PC-9 (cell line): ENCODE measurements at regions of chr7 and their contacts with region 1.

Region 1: GRCh38 chr7:151759591-151760042 is 117.3 kb downstream of the PRKAG2 start:
- DNase-seq: peak; percentile 60 to 75
- H3K4me3 ChIP-seq: no peak overlapping the region
- H3K27ac ChIP-seq: no peak overlapping the region
- H3K4me1 ChIP-seq: peaks cover 15% of the 10 kb centered on the region
- H3K27me3 ChIP-seq: no peaks in the 10 kb centered on the region
- CTCF ChIP-seq: peak; percentile 99

Region 2: GRCh38 chr7:151448261-151449252 is 311.1 kb before region 1 on chr7:
- CTCF ChIA-PET with region 1: no interaction called
- POLR2A ChIA-PET with region 1: no interaction called
- intact Hi-C with region 1: loop called (anchors 5 kb)
- DNase-seq: peak; percentile 43 to 77
- H3K4me3 ChIP-seq: peak overlapping the region; percentile 53
- H3K27ac ChIP-seq: no peak overlapping the region
- H3K4me1 ChIP-seq: no peaks in the 10 kb centered on the region
- H3K27me3 ChIP-seq: no peaks in the 10 kb centered on the region
- CTCF ChIP-seq: peak; percentile 83

Region 3: GRCh38 chr7:151570366-151570915 is 189.2 kb before region 1 on chr7:
- CTCF ChIA-PET with region 1: no interaction called
- POLR2A ChIA-PET with region 1: no interaction called
- intact Hi-C with region 1: loop called (anchors 1 kb)
- DNase-seq: no peak
- H3K4me3 ChIP-seq: no peak overlapping the region
- H3K27ac ChIP-seq: no peak overlapping the region
- H3K4me1 ChIP-seq: no peaks in the 10 kb centered on the region
- H3K27me3 ChIP-seq: no peaks in the 10 kb centered on the region
- CTCF ChIP-seq: peak; percentile 86

Region 4: GRCh38 chr7:151626422-151627115 is 133.0 kb before region 1 on chr7:
- CTCF ChIA-PET with region 1: interaction called, 7 read pairs
- POLR2A ChIA-PET with region 1: no interaction called
- intact Hi-C with region 1: loop called (anchors 1 kb)
- DNase-seq: peak; percentile 37 to 55
- H3K4me3 ChIP-seq: no peak overlapping the region
- H3K27ac ChIP-seq: no peak overlapping the region
- H3K4me1 ChIP-seq: peaks cover 16% of the 10 kb centered on the region
- H3K27me3 ChIP-seq: no peaks in the 10 kb centered on the region
- CTCF ChIP-seq: peak; percentile 65

Region 5: GRCh38 chr7:151954866-151955820 is 195.5 kb after region 1 on chr7:
- CTCF ChIA-PET with region 1: no interaction called
- POLR2A ChIA-PET with region 1: no interaction called
- intact Hi-C with region 1: no loop called
- DNase-seq: no peak
- H3K4me3 ChIP-seq: no peak overlapping the region
- H3K27ac ChIP-seq: no peak overlapping the region
- H3K4me1 ChIP-seq: no peaks in the 10 kb centered on the region
- H3K27me3 ChIP-seq: peaks cover 63% of the 10 kb centered on the region
- CTCF ChIP-seq: no peak

Region 6: GRCh38 chr7:152145853-152146466 is 386.3 kb after region 1 on chr7:
- CTCF ChIA-PET with region 1: no interaction called
- POLR2A ChIA-PET with region 1: no interaction called
- intact Hi-C with region 1: loop called (anchors 10 kb)
- DNase-seq: peak; percentile 41 to 50
- H3K4me3 ChIP-seq: no peak overlapping the region
- H3K27ac ChIP-seq: no peak overlapping the region
- H3K4me1 ChIP-seq: no peaks in the 10 kb centered on the region
- H3K27me3 ChIP-seq: no peaks in the 10 kb centered on the region
- CTCF ChIP-seq: peak; percentile 77